ENCODE measurements at regions of chr1 and their contacts with region 1.

Region 1: GRCh38 chr1:61163355-61163754 is 81.0 kb downstream of the NFIA start:
- DNase-seq: no peak
- ATAC-seq: no peak
- H3K4me3 ChIP-seq: no peak overlapping the region
- H3K27ac ChIP-seq: no peak overlapping the region; the same call in 1 of the 2 replicates
- H3K4me1 ChIP-seq: peaks cover 7% of the 10 kb centered on the region
- H3K27me3 ChIP-seq: no peaks in the 10 kb centered on the region
- CTCF ChIP-seq: no peak
- POLR2A ChIP-seq: no peak
- RAD21 ChIP-seq: no peak

Region 2: DNA sequence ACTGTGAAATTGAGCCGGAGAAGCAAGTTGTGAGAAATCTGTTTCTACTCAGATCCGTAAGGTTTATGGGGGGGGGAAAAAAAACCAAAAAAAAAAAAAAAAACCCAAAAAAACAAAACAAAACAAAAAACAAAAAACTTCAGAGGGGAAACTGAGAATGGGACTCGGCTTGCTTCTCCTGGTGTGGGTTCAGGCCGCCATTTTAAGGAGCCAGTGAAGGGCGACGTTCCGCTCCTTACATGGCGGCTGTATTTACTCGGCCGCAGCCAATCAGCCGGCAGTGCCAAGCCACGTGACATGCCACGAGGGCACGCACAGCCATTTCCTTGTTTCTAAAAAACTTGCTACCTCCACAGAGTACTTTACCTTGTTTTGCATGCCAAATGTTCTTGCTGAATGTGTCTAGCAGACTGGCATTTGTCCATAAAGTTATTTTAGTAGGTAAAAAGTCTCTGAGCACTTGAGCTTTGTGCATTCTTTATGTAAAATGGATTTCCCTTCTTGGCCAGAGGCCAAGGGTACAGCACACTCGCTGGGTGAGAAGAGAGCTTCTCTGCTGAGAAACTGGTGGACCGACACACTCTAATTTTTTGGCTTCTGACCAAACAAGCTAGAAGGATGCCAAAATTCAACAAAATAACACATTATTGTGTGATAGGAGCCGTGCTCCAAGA is 20.8 kb after region 1 on chr1:
- CTCF ChIA-PET with region 1: no interaction called
- POLR2A ChIA-PET with region 1: no interaction called
- dilution Hi-C with region 1: no loop called
- in situ Hi-C with region 1: no loop called
- intact Hi-C with region 1: no loop called
- DNase-seq: peak; percentile 63
- ATAC-seq: peak; percentile 67
- H3K4me3 ChIP-seq: peak overlapping the region; percentile 8; the same call in 1 of the 2 replicates
- H3K27ac ChIP-seq: peak overlapping the region; percentile 77; the same call in 1 of the 2 replicates
- H3K4me1 ChIP-seq: peaks cover 6% of the 10 kb centered on the region
- H3K27me3 ChIP-seq: no peaks in the 10 kb centered on the region
- CTCF ChIP-seq: no peak
- POLR2A ChIP-seq: no peak
- RAD21 ChIP-seq: no peak

Region 3: DNA sequence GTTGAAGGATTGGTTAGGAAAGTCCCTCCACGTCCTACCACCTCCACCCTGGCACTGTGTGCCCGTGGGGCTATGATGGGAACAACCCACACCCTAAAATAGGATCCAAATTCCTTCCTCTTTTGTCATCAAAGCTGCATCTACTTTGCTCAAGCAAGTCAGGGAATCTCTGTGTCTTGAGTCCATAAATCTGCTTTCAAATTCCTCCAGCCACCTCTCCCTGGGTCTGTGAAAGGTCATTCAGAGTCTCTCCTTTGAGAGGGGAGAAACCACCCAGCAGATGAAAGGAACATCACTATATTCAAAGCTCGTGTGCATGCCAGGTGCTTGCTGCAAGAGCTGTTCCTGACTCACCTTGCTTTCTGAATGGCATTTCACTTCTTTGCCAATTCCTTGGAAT is 318.0 kb after region 1 on chr1:
- CTCF ChIA-PET with region 1: no interaction called
- POLR2A ChIA-PET with region 1: no interaction called
- dilution Hi-C with region 1: no loop called
- in situ Hi-C with region 1: no loop called
- intact Hi-C with region 1: no loop called
- DNase-seq: no peak
- ATAC-seq: no peak
- H3K4me3 ChIP-seq: no peak overlapping the region
- H3K27ac ChIP-seq: no peak overlapping the region
- H3K4me1 ChIP-seq: no peaks in the 10 kb centered on the region
- H3K27me3 ChIP-seq: peaks cover 4% of the 10 kb centered on the region; the same call in 1 of the 2 replicates
- CTCF ChIP-seq: no peak
- POLR2A ChIP-seq: no peak
- RAD21 ChIP-seq: no peak

Region 4: GRCh38 chr1:61993331-61993961 is 830.1 kb after region 1 on chr1:
- CTCF ChIA-PET with region 1: no interaction called
- POLR2A ChIA-PET with region 1: interaction called, 15 read pairs
- dilution Hi-C with region 1: no loop called
- in situ Hi-C with region 1: no loop called
- intact Hi-C with region 1: no loop called
- DNase-seq: no peak
- ATAC-seq: no peak
- H3K4me3 ChIP-seq: no peak overlapping the region
- H3K27ac ChIP-seq: no peak overlapping the region
- H3K4me1 ChIP-seq: no peaks in the 10 kb centered on the region
- H3K27me3 ChIP-seq: no peaks in the 10 kb centered on the region
- CTCF ChIP-seq: no peak
- POLR2A ChIP-seq: no peak
- RAD21 ChIP-seq: no peak

Measured in IMR-90 (cell line).